GM12878 (cell line): ENCODE measurements at regions of chr3 and their contacts with region 1.

Region 1: GRCh38 chr3:31562525-31562924 is 29.8 kb downstream of the STT3B start:
- DNase-seq: no peak
- ATAC-seq: peak; percentile 13
- H3K4me3 ChIP-seq: no peak overlapping the region
- H3K27ac ChIP-seq: no peak overlapping the region
- H3K4me1 ChIP-seq: no peaks in the 10 kb centered on the region; the same call in 1 of the 2 replicates
- H3K27me3 ChIP-seq: no peaks in the 10 kb centered on the region
- CTCF ChIP-seq: 0 out of 6 replicates have a peak, but pooled peaks of 1 of the 3 experiments have one; percentile 2
- EP300 ChIP-seq: no peak
- POLR2A ChIP-seq: no peak
- RAD21 ChIP-seq: no peak

Region 2: GRCh38 chr3:31142127-31142526 is 420.4 kb before region 1 on chr3:
- CTCF ChIA-PET with region 1: no interaction called
- POLR2A ChIA-PET with region 1: no interaction called
- RAD21 ChIA-PET with region 1: no interaction called
- SMC1A ChIA-PET with region 1: no interaction called
- in situ Hi-C with region 1: no loop called
- intact Hi-C with region 1: no loop called
- DNase-seq: no peak
- ATAC-seq: no peak
- H3K4me3 ChIP-seq: no peak overlapping the region
- H3K27ac ChIP-seq: no peak overlapping the region
- H3K4me1 ChIP-seq: no peaks in the 10 kb centered on the region
- H3K27me3 ChIP-seq: no peaks in the 10 kb centered on the region
- CTCF ChIP-seq: no peak
- EP300 ChIP-seq: no peak
- POLR2A ChIP-seq: no peak
- RAD21 ChIP-seq: no peak

Region 3: GRCh38 chr3:31573036-31573779 is 10.7 kb after region 1 on chr3:
- CTCF ChIA-PET with region 1: interaction called, 7 read pairs
- POLR2A ChIA-PET with region 1: no interaction called
- RAD21 ChIA-PET with region 1: no interaction called
- SMC1A ChIA-PET with region 1: interaction called, 12 read pairs
- in situ Hi-C with region 1: no loop called
- intact Hi-C with region 1: no loop called
- DNase-seq: no peak
- ATAC-seq: peak; percentile 75
- H3K4me3 ChIP-seq: no peak overlapping the region
- H3K27ac ChIP-seq: no peak overlapping the region
- H3K4me1 ChIP-seq: peaks cover 17% of the 10 kb centered on the region
- H3K27me3 ChIP-seq: no peaks in the 10 kb centered on the region
- CTCF ChIP-seq: no peak
- EP300 ChIP-seq: no peak
- POLR2A ChIP-seq: no peak
- RAD21 ChIP-seq: no peak

Region 4: DNA sequence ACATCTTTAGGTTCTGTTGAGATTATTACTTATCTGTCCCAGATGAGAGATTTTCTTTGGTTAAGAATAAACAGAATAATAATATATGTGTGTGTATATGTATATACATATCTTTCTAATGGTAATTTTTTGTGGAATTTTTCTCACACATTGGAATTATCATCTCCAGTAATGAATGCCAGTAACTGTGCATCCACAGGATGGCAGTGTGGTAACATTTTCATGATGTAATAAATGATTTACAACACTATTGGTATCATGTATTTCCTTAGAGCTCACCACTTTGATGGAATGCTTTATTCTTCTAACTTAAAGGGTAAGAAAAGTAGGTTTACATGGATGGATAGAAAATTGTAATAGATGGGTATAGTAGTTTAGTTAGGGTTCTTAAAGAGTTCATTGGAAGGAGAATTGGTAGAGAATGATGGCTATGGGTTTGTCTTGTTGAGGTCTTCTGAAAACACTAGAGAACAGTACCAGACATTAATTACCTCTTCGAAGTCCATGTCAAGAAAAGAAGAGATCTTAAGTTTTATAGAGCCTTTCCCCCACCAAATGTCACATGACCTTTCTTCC is 48.3 kb after region 1 on chr3:
- CTCF ChIA-PET with region 1: no interaction called
- POLR2A ChIA-PET with region 1: no interaction called
- RAD21 ChIA-PET with region 1: no interaction called
- SMC1A ChIA-PET with region 1: interaction called, 3 read pairs
- in situ Hi-C with region 1: no loop called
- intact Hi-C with region 1: loop called (anchors 5 kb)
- DNase-seq: no peak
- ATAC-seq: peak; percentile 50; the same call in 2 of the 3 replicates
- H3K4me3 ChIP-seq: no peak overlapping the region
- H3K27ac ChIP-seq: no peak overlapping the region
- H3K4me1 ChIP-seq: no peaks in the 10 kb centered on the region
- H3K27me3 ChIP-seq: no peaks in the 10 kb centered on the region
- CTCF ChIP-seq: peak; percentile 24 to 40 (median 28); a peak in 3 of 6 replicates
- EP300 ChIP-seq: no peak
- POLR2A ChIP-seq: no peak
- RAD21 ChIP-seq: peak; percentile 33; the same call in 1 of the 2 replicates

Region 5: GRCh38 chr3:31908391-31909097 is 346.0 kb after region 1 on chr3:
- CTCF ChIA-PET with region 1: no interaction called
- POLR2A ChIA-PET with region 1: no interaction called
- RAD21 ChIA-PET with region 1: no interaction called
- SMC1A ChIA-PET with region 1: no interaction called
- in situ Hi-C with region 1: no loop called
- intact Hi-C with region 1: no loop called
- DNase-seq: no peak
- ATAC-seq: peak; percentile 28; the same call in 1 of the 3 replicates
- H3K4me3 ChIP-seq: no peak overlapping the region
- H3K27ac ChIP-seq: no peak overlapping the region
- H3K4me1 ChIP-seq: no peaks in the 10 kb centered on the region
- H3K27me3 ChIP-seq: no peaks in the 10 kb centered on the region
- CTCF ChIP-seq: no peak
- EP300 ChIP-seq: no peak
- POLR2A ChIP-seq: no peak
- RAD21 ChIP-seq: no peak